ENCODE measurements at regions of chr22 and their contacts with region 1.

Region 1: GRCh38 chr22:20268279-20269012 is at the start of gene RTN4R:
- DNase-seq: peak; percentile 53 to 82 (median 67)
- ATAC-seq: peak; percentile 51 to 92 (median 83)
- H3K4me3 ChIP-seq: peak within 1 kb of the TSS in 11 of 12 donors; percentile 40 to 79 (median 54)
- H3K27ac ChIP-seq: peak within 1 kb of the TSS in 5 of 12 donors; percentile 20 to 65 (median 55)
- H3K4me1 ChIP-seq: peaks cover 0 to 17% (median 10%) of the 10 kb centered on the region in 12 donors
- H3K27me3 ChIP-seq: peaks cover 0 to 8% (median 0%) of the 10 kb centered on the region in 9 donors
- CTCF ChIP-seq: peak; percentile 38 to 93 (median 70)
- POLR2A ChIP-seq: no peak
- total RNA-seq, gene RTN4R: 0.53 to 2.6 (median 1.4) TPM

Region 2: GRCh38 chr22:18968011-18968749 is 1300.3 kb before region 1 on chr22:
- intact Hi-C with region 1: loop called in 1 of 10 experiments (anchors 5 kb)
- DNase-seq: peak in 4 of 5 donors; percentile 27 to 60 (median 44)
- ATAC-seq: peak in 3 of 4 donors; percentile 20 to 52 (median 31)
- H3K4me3 ChIP-seq: no peak overlapping the region
- H3K27ac ChIP-seq: no peak overlapping the region
- H3K4me1 ChIP-seq: peaks cover 0 to 13% (median 0%) of the 10 kb centered on the region in 12 donors
- H3K27me3 ChIP-seq: peaks cover 0 to 30% (median 16%) of the 10 kb centered on the region in 9 donors
- CTCF ChIP-seq: no peak
- POLR2A ChIP-seq: no peak

Region 3: GRCh38 chr22:20156611-20157429 is 111.6 kb before region 1 on chr22:
- intact Hi-C with region 1: loop called in 7 of 10 experiments (anchors 1 to 5 kb)
- DNase-seq: peak; percentile 75 to 91 (median 79)
- ATAC-seq: peak; percentile 30 to 77 (median 72)
- H3K4me3 ChIP-seq: no peak overlapping the region
- H3K27ac ChIP-seq: no peak overlapping the region
- H3K4me1 ChIP-seq: peaks cover 0 to 11% (median 0%) of the 10 kb centered on the region in 12 donors
- H3K27me3 ChIP-seq: peaks cover 0 to 10% (median 0%) of the 10 kb centered on the region in 9 donors
- CTCF ChIP-seq: peak; percentile 96 to 100 (median 99)
- POLR2A ChIP-seq: no peak

Region 4: GRCh38 chr22:20174785-20175596 is 93.5 kb before region 1 on chr22:
- intact Hi-C with region 1: loop called in 4 of 10 experiments (anchors 5 to 10 kb)
- DNase-seq: no peak
- ATAC-seq: peak in 3 of 4 donors; percentile 13 to 38 (median 14)
- H3K4me3 ChIP-seq: no peak overlapping the region
- H3K27ac ChIP-seq: no peak overlapping the region
- H3K4me1 ChIP-seq: no peaks in the 10 kb centered on the region
- H3K27me3 ChIP-seq: no peaks in the 10 kb centered on the region
- CTCF ChIP-seq: peak in 8 of 12 donors; percentile 9 to 42 (median 18)
- POLR2A ChIP-seq: no peak

Region 5: GRCh38 chr22:20238536-20238900 is 29.9 kb before region 1 on chr22:
- intact Hi-C with region 1: loop called in 2 of 10 experiments (anchors 2 kb)
- DNase-seq: peak; percentile 45 to 80 (median 55)
- ATAC-seq: peak; percentile 49 to 75 (median 54)
- H3K4me3 ChIP-seq: peak overlapping the region in 3 of 12 donors; percentile 7 to 22 (median 18)
- H3K27ac ChIP-seq: peak overlapping the region; percentile 52 to 94 (median 83)
- H3K4me1 ChIP-seq: peaks cover 8 to 50% (median 43%) of the 10 kb centered on the region in 12 donors
- H3K27me3 ChIP-seq: no peaks in the 10 kb centered on the region
- CTCF ChIP-seq: peak; percentile 23 to 70 (median 56)
- POLR2A ChIP-seq: no peak

Region 6: GRCh38 chr22:20312396-20313191 is 44.1 kb after region 1 on chr22:
- intact Hi-C with region 1: no loop called
- DNase-seq: no peak
- ATAC-seq: no peak
- H3K4me3 ChIP-seq: no peak overlapping the region
- H3K27ac ChIP-seq: no peak overlapping the region
- H3K4me1 ChIP-seq: peaks cover 0 to 17% (median 5%) of the 10 kb centered on the region in 12 donors
- H3K27me3 ChIP-seq: no peaks in the 10 kb centered on the region
- CTCF ChIP-seq: no peak
- POLR2A ChIP-seq: no peak

Measured in heart left ventricle (tissue), 16 donors.